Right cardiac atrium (tissue), 5 donors: ENCODE measurements at regions of chr13 and their contacts with region 1.

Region 1: GRCh38 chr13:59834801-59835200 is 328.9 kb downstream of the DIAPH3 start:
- DNase-seq: no peak
- ATAC-seq: no peak
- H3K4me3 ChIP-seq: no peak overlapping the region
- H3K27ac ChIP-seq: no peak overlapping the region
- H3K4me1 ChIP-seq: no peaks in the 10 kb centered on the region
- H3K27me3 ChIP-seq: no peaks in the 10 kb centered on the region

Region 2: DNA sequence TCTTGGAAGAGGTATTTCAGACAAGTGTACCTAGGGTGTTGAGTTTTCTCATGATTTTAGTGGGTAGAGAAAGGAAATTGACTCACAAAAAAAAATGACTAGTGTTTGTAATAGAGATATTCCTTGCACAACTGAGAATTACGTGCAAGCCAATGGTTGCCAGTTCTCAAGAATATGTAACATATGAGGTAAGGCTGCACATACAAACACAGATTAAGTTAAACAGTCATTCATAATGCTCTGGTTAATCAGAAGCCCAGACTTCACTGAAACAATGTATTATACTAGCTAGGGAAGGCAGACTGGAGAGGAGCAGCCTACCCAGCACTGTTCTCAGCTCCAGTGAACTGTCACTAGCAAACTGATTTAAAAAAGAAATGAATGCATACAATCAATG is 89.4 kb before region 1 on chr13:
- intact Hi-C with region 1: no loop called
- DNase-seq: no peak
- ATAC-seq: no peak
- H3K4me3 ChIP-seq: no peak overlapping the region
- H3K27ac ChIP-seq: no peak overlapping the region
- H3K4me1 ChIP-seq: no peaks in the 10 kb centered on the region
- H3K27me3 ChIP-seq: no peaks in the 10 kb centered on the region

Region 3: GRCh38 chr13:59771272-59771671 is 63.5 kb before region 1 on chr13:
- intact Hi-C with region 1: loop called in 1 of 4 experiments (anchors 10 kb)
- DNase-seq: no peak
- ATAC-seq: no peak
- H3K4me3 ChIP-seq: no peak overlapping the region
- H3K27ac ChIP-seq: no peak overlapping the region
- H3K4me1 ChIP-seq: no peaks in the 10 kb centered on the region
- H3K27me3 ChIP-seq: no peaks in the 10 kb centered on the region

Region 4: GRCh38 chr13:60617991-60618733 is 783.4 kb after region 1 on chr13:
- intact Hi-C with region 1: no loop called
- DNase-seq: no peak
- ATAC-seq: no peak
- H3K4me3 ChIP-seq: no peak overlapping the region
- H3K27ac ChIP-seq: no peak overlapping the region
- H3K4me1 ChIP-seq: no peaks in the 10 kb centered on the region
- H3K27me3 ChIP-seq: no peaks in the 10 kb centered on the region